Endothelial cell of umbilical vein (primary cell): ENCODE measurements at regions of chr10 and their contacts with region 1.

Region 1: GRCh38 chr10:6088721-6089390 is at the start of gene RBM17:
- DNase-seq: peak; percentile 97
- H3K4me3 ChIP-seq: peak within 1 kb of the TSS; percentile 59 to 85 (median 74)
- H3K27ac ChIP-seq: peak within 1 kb of the TSS; percentile 83
- H3K4me1 ChIP-seq: peaks cover 37% of the 10 kb centered on the region
- H3K27me3 ChIP-seq: no peaks in the 10 kb centered on the region
- CTCF ChIP-seq: peak; percentile 100
- POLR2A ChIP-seq: peak; percentile 83
- total RNA-seq, gene RBM17: 148 TPM in 2 replicates

Region 2: GRCh38 chr10:5889624-5890451 is 199.0 kb before region 1 on chr10 and contains the starts of genes ANKRD16 and FBH1:
- CTCF ChIA-PET with region 1: no interaction called
- POLR2A ChIA-PET with region 1: interaction called, 5 read pairs
- dilution Hi-C with region 1: no loop called
- intact Hi-C with region 1: loop called (anchors 5 kb)
- DNase-seq: peak; percentile 99
- H3K4me3 ChIP-seq: peak within 1 kb of the TSS; percentile 16 to 95 (median 62)
- H3K27ac ChIP-seq: peak within 1 kb of the TSS; percentile 44
- H3K4me1 ChIP-seq: peaks cover 36% of the 10 kb centered on the region
- H3K27me3 ChIP-seq: no peaks in the 10 kb centered on the region
- CTCF ChIP-seq: no peak
- POLR2A ChIP-seq: peak; percentile 82
- total RNA-seq, gene ANKRD16: 4.4 and 6.9 TPM in 2 replicates
- total RNA-seq, gene FBH1: 86.1 and 97.0 TPM in 2 replicates

Region 3: GRCh38 chr10:5971315-5971832 is 117.5 kb before region 1 on chr10:
- CTCF ChIA-PET with region 1: interaction called, 5 read pairs
- POLR2A ChIA-PET with region 1: no interaction called
- dilution Hi-C with region 1: loop called (anchors 25 kb)
- intact Hi-C with region 1: loop called (anchors 10 kb)
- DNase-seq: peak; percentile 88
- H3K4me3 ChIP-seq: peak overlapping the region in 1 of 3 experiments; percentile 28
- H3K27ac ChIP-seq: peak overlapping the region; percentile 88
- H3K4me1 ChIP-seq: peaks cover 40% of the 10 kb centered on the region
- H3K27me3 ChIP-seq: no peaks in the 10 kb centered on the region
- CTCF ChIP-seq: no peak
- POLR2A ChIP-seq: no peak

Region 4: GRCh38 chr10:6014241-6014761 is 74.6 kb before region 1 on chr10:
- CTCF ChIA-PET with region 1: interaction called, 21 read pairs
- POLR2A ChIA-PET with region 1: no interaction called
- dilution Hi-C with region 1: no loop called
- intact Hi-C with region 1: loop called (anchors 1 kb)
- DNase-seq: peak; percentile 53
- H3K4me3 ChIP-seq: no peak overlapping the region
- H3K27ac ChIP-seq: no peak overlapping the region
- H3K4me1 ChIP-seq: no peaks in the 10 kb centered on the region
- H3K27me3 ChIP-seq: peaks cover 0 to 6% of the 10 kb centered on the region in 2 experiments
- CTCF ChIP-seq: peak; percentile 58 to 60
- POLR2A ChIP-seq: no peak

Region 5: DNA sequence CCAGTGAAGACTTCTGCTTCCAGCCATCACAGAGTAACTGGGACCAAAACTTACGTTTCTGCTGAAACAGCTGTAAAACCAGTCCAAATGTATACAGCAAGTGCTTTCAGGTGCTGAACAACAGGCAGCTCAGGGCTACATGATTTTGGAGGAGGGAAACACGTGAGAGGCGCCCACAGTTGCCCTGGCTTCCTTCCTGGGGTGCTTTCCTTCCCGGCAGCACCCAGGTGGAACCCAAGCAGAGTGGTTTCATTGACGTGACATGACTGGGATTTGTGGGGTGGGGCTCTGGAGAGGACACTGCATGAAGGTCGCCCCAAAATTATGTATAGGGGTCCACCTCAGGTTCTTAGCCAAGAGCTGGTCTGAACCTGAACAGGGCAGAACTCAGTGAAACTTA is 60.9 kb before region 1 on chr10:
- CTCF ChIA-PET with region 1: no interaction called
- POLR2A ChIA-PET with region 1: no interaction called
- dilution Hi-C with region 1: no loop called
- intact Hi-C with region 1: no loop called
- DNase-seq: no peak
- H3K4me3 ChIP-seq: no peak overlapping the region
- H3K27ac ChIP-seq: no peak overlapping the region
- H3K4me1 ChIP-seq: no peaks in the 10 kb centered on the region
- H3K27me3 ChIP-seq: no peaks in the 10 kb centered on the region
- CTCF ChIP-seq: no peak
- POLR2A ChIP-seq: no peak

Region 6: DNA sequence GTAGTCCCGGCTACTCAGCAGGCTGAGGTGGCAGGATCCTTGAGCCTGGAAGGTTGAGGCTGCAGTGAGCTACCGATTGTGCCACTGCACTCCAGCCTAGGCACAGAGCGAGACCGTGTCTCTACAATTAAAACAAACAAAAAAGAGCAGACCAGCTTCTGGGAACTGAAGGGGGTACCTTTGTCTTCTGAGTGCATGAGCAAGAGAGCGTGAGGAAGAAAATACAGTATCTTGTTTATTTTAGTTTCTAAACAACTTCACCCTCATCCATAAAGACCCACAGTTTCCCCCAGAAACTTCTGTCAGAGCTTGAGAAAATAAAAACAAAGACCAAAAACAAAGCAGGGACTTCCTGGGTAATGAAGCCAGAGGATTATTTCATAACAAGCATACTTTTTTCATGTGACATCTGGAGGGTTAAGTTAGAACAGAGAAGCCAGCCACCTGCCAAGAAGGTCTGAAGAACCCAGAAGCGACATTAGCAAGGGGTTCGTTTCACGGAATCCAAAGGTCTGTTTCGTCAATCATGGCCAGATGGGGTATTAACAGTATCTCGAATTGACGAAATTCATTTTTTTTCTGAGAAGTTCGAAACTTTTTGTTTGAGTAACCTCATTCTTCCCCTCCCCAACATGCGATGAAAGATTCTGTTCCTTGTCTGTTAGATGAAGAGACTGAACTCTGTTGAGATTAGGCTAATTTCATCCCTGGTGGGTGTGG is 16.5 kb before region 1 on chr10:
- CTCF ChIA-PET with region 1: interaction called, 11 read pairs
- POLR2A ChIA-PET with region 1: no interaction called
- dilution Hi-C with region 1: no loop called
- intact Hi-C with region 1: no loop called
- DNase-seq: no peak
- H3K4me3 ChIP-seq: no peak overlapping the region
- H3K27ac ChIP-seq: no peak overlapping the region
- H3K4me1 ChIP-seq: no peaks in the 10 kb centered on the region
- H3K27me3 ChIP-seq: peaks cover 6 to 7% of the 10 kb centered on the region in 2 experiments
- CTCF ChIP-seq: no peak
- POLR2A ChIP-seq: no peak

Region 7: GRCh38 chr10:6151087-6151977 is 62.5 kb after region 1 on chr10:
- CTCF ChIA-PET with region 1: interaction called, 3 read pairs
- POLR2A ChIA-PET with region 1: interaction called, 5 read pairs
- dilution Hi-C with region 1: no loop called
- intact Hi-C with region 1: loop called (anchors 1 kb)
- DNase-seq: peak; percentile 83
- H3K4me3 ChIP-seq: peak overlapping the region in 1 of 3 experiments; percentile 16
- H3K27ac ChIP-seq: peak overlapping the region; percentile 25
- H3K4me1 ChIP-seq: peaks cover 9% of the 10 kb centered on the region
- H3K27me3 ChIP-seq: no peaks in the 10 kb centered on the region
- CTCF ChIP-seq: peak; percentile 72 to 78
- POLR2A ChIP-seq: no peak

Region 8: DNA sequence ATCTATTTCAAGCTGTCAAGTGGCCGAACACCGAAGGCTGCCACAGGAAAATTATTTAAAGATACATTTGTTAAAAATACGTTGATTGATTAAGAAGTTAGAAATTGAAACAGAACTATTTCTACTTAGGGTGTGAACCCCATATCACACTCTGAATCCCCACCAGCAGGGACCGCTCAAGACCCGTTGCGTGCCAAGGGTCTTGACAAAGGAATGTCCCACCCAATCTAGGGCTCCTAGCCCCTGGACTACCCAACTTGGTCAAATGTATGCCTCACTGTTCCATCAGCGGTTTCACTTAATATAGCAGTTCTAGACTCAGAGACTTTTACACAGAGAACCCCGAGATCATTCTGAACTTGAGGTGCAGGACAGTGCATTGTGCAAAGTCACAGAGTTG is 102.3 kb after region 1 on chr10:
- CTCF ChIA-PET with region 1: no interaction called
- POLR2A ChIA-PET with region 1: no interaction called
- dilution Hi-C with region 1: no loop called
- intact Hi-C with region 1: no loop called
- DNase-seq: no peak
- H3K4me3 ChIP-seq: no peak overlapping the region
- H3K27ac ChIP-seq: no peak overlapping the region
- H3K4me1 ChIP-seq: peaks cover 22% of the 10 kb centered on the region
- H3K27me3 ChIP-seq: no peaks in the 10 kb centered on the region
- CTCF ChIP-seq: no peak
- POLR2A ChIP-seq: no peak

Region 9: GRCh38 chr10:6819301-6819700 is 730.4 kb after region 1 on chr10:
- CTCF ChIA-PET with region 1: no interaction called
- POLR2A ChIA-PET with region 1: no interaction called
- dilution Hi-C with region 1: no loop called
- intact Hi-C with region 1: no loop called
- DNase-seq: no peak
- H3K4me3 ChIP-seq: no peak overlapping the region
- H3K27ac ChIP-seq: no peak overlapping the region
- H3K4me1 ChIP-seq: no peaks in the 10 kb centered on the region
- H3K27me3 ChIP-seq: no peaks in the 10 kb centered on the region
- CTCF ChIP-seq: no peak
- POLR2A ChIP-seq: no peak

Region 10: DNA sequence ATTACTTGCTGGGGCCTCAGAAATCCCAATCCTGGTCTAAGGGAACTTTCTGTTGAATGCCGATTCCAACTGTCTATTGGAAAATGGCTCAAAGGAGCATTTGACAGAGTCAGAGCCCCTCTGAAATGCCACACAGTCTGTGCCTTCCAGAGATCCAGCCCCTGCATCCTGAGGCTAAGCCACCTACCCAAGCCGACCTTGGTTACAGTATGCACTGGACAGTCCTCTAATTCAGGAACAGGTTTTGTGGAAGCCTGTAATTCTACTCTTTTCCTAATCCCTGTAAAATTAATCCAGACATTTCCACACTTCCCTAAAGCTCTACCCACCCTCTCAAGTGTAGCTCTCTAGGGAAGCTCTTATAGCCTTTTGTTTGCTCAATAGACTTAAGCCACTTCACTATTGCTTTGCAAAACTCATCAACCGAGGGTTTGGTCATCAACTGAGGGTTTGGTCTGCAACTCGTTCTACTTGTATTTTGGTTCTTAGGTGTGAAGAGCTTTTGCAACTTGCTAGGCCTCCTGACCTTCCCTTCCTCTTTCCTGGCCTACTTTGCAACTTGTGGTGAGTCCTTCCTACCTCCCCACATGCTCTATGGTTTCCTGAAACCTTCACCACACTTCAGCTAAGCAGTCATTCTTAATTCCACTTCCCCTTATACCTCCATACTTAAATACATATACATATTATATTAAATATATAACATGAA is 957.2 kb after region 1 on chr10:
- CTCF ChIA-PET with region 1: no interaction called
- POLR2A ChIA-PET with region 1: no interaction called
- dilution Hi-C with region 1: no loop called
- intact Hi-C with region 1: no loop called
- DNase-seq: no peak
- H3K4me3 ChIP-seq: no peak overlapping the region
- H3K27ac ChIP-seq: no peak overlapping the region
- H3K4me1 ChIP-seq: no peaks in the 10 kb centered on the region
- H3K27me3 ChIP-seq: no peaks in the 10 kb centered on the region
- CTCF ChIP-seq: no peak
- POLR2A ChIP-seq: no peak